CD8-positive, alpha-beta memory T cell (primary cell): ENCODE measurements at regions of chr22 and their contacts with region 1.

Region 1: DNA sequence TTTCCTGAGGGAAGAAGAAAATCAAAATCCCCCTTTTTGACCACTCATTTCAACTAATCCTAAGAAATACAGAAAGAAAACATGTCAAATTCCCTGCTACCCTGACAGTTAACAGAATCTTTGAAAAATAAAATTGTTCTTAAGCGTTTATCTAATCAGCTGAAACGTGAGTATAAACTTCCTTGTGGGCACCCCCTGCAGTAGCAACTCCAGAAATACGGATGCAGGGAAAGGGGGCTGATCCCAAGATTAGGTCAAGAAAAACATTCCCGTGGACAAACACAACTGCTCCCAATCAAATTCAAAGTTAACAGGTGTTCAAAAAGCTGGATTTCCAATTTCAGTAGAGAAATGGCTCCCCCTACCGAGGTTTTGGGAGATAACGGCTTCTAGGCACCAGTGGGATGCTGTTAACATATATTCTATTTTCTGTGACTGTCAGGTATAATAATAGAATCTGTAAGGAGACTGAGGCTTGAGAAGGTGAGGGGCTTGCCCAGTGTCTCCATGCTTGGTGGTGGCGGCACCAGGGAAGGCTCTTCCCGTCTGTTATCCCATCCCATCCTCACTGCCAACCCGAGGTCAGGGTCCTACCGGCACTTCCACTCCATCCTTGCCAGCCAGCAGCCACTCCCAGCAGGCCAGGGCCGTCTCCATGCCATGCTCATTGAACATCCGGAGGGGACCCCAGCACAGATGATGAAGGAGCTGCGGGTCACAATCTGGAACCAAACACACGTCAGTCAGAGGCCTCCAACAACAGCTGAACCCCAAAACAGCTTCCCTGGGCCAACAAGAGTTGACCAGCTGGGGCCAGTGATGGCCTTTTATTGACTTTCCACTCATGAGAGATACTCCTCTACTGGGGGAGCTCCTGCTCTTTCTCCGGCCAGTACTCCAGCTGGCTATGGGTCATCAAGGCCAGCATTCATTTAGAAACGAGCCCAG is 32.0 kb upstream of the SERPIND1 start:
- DNase-seq: peak in 3 of 5 donors; percentile 22 to 50 (median 31)
- H3K4me3 ChIP-seq: no peak overlapping the region
- H3K4me3 Mint-ChIP-seq: no peak overlapping the region
- H3K27ac ChIP-seq: no peak overlapping the region
- H3K27ac Mint-ChIP-seq: peak overlapping the region in 1 of 8 donors; percentile 21
- H3K4me1 ChIP-seq: no peaks in the 10 kb centered on the region
- H3K4me1 Mint-ChIP-seq: no peaks in the 10 kb centered on the region
- H3K27me3 ChIP-seq: no peaks in the 10 kb centered on the region
- H3K27me3 Mint-ChIP-seq: no peaks in the 10 kb centered on the region

Region 2: GRCh38 chr22:20606041-20606783 is 135.7 kb before region 1 on chr22:
- CTCF ChIA-PET with region 1: interaction called, 14 read pairs
- POLR2A ChIA-PET with region 1: no interaction called
- DNase-seq: peak; percentile 41 to 77 (median 61)
- H3K4me3 ChIP-seq: no peak overlapping the region
- H3K4me3 Mint-ChIP-seq: peak overlapping the region in 1 of 7 donors; percentile 11
- H3K27ac ChIP-seq: no peak overlapping the region
- H3K27ac Mint-ChIP-seq: peak overlapping the region in 4 of 8 donors; percentile 36 to 78 (median 60)
- H3K4me1 ChIP-seq: peaks cover 9% of the 10 kb centered on the region
- H3K4me1 Mint-ChIP-seq: peaks cover 9 to 10% (median 10%) of the 10 kb centered on the region in 3 donors
- H3K27me3 ChIP-seq: peaks cover 6% of the 10 kb centered on the region
- H3K27me3 Mint-ChIP-seq: peaks cover 0 to 1% of the 10 kb centered on the region in 2 donors

Region 3: DNA sequence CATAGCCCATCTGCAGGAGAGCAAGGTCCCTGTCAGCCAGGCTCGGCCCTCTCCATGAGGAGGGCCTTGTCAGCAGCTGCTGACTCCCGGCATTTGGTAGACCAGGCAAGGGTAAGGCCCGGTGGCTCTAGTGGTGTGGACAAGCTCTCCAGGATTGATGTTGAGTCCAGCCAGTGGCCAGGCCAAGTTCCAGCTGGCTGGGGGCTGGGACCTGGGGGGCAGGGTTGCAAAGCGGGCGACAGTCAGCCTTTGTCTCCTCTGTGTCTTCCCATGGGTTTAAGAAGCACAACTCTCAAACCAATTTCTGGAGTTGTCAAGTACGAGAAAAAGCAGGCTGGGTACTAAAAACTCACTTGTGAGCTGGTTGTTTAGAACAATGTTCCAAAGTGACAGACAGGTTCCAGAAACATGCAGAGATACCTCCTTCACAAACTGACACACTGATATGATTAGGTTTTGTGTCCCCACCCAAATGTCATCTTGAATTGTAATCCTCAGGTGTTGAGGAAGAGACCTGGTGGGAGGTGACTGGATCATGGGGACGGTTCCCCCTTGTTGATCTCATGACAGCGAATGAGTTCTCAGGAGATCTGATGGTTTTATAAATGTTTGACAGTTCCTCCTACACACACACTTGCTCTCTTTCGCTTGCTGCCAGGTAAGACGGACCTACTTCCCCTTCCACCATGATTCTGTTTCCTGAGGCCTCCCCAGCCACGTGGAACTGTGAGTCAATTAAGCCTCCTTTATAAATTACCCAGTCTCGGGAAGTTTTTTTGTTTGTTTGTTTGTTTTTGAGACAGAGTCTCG is 20.3 kb before region 1 on chr22:
- CTCF ChIA-PET with region 1: no interaction called
- POLR2A ChIA-PET with region 1: no interaction called
- DNase-seq: no peak
- H3K4me3 ChIP-seq: no peak overlapping the region
- H3K4me3 Mint-ChIP-seq: no peak overlapping the region
- H3K27ac ChIP-seq: no peak overlapping the region
- H3K27ac Mint-ChIP-seq: peak overlapping the region in 2 of 8 donors; percentile 26 to 64
- H3K4me1 ChIP-seq: no peaks in the 10 kb centered on the region
- H3K4me1 Mint-ChIP-seq: no peaks in the 10 kb centered on the region
- H3K27me3 ChIP-seq: no peaks in the 10 kb centered on the region
- H3K27me3 Mint-ChIP-seq: no peaks in the 10 kb centered on the region

Region 4: DNA sequence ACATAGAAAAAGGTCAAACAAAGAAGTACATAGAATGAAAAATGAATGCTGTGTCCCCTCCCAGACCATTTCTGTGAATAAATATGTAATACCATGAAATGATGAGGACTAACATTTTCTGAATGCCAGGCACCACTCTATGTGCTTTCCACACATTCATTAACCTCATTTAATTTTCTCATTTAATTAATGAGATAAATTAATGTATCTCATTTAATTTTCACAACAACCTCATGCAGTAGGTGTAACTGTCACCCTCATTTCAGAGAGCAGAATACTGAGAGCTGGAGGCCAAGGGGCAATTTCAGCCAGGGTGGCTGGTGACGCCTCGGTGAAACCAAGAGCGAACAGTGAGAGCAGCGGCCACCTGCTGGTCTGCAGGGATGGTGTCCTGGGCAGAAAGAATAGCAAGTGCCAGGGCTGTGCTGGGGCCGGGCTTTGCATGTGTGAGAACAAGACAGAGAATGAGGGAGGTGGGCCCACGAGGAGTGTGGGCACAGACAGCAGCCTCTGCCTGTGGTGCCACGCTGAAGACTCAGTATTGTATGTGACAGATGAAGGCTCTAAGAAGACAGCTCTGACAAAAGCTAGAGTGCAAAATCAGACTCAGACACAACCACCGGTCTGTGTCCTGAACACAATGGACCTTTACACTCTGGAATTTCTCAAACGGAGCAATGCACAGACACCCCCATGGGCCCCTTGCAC is 30.2 kb after region 1 on chr22:
- CTCF ChIA-PET with region 1: no interaction called
- POLR2A ChIA-PET with region 1: no interaction called
- DNase-seq: no peak
- H3K4me3 ChIP-seq: no peak overlapping the region
- H3K4me3 Mint-ChIP-seq: no peak overlapping the region
- H3K27ac ChIP-seq: no peak overlapping the region
- H3K27ac Mint-ChIP-seq: peak overlapping the region in 2 of 8 donors; percentile 22 to 68
- H3K4me1 ChIP-seq: no peaks in the 10 kb centered on the region
- H3K4me1 Mint-ChIP-seq: peaks cover 0 to 10% (median 10%) of the 10 kb centered on the region in 3 donors
- H3K27me3 ChIP-seq: no peaks in the 10 kb centered on the region
- H3K27me3 Mint-ChIP-seq: no peaks in the 10 kb centered on the region